AG04450 (cell line): ENCODE measurements at regions of chr7 and their contacts with region 1.

Region 1: DNA sequence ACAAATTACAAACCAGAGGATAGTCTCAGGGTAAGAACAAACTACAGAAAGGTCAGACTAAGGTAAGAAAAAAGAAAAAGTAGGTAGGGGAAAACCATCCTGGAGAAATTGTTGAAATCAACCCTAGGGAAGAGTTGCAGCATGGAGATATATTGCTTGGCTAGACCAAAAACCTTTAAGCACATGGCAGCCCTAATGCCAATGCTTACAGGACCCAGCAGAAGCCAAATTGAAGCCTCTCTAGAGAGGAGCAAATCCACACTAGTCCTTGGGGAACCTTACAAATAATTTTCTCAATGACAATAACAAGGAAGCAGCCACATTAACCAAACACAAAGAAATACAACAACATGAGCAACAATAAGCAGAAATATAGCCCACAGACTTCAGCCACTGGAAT is 81.9 kb downstream of the CNOT4 start:
- DNase-seq: no peak
- H3K4me3 ChIP-seq: no peak overlapping the region
- H3K27ac ChIP-seq: no peak overlapping the region
- H3K27me3 ChIP-seq: no peaks in the 10 kb centered on the region
- CTCF ChIP-seq: no peak

Region 2: DNA sequence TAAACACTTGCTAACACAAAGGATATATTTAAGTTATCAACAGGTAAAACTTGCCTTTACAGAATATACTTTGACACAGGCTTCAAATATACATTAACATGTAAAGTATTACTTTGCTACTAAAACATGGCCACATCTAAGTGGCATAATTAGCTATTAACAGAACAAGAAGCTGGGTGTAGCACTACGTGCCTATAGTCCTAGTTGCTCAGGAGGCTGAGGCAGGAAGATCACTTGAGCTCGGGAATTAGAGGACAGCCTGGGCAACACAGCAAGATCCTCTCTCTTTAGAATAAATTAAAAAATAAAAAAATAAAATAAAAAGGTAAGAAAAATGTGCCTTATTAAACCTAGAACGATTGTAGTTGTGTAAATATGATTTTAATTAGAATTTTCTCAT is 24.7 kb before region 1 on chr7:
- CTCF ChIA-PET with region 1: no interaction called
- POLR2A ChIA-PET with region 1: no interaction called
- DNase-seq: no peak
- H3K4me3 ChIP-seq: no peak overlapping the region
- H3K27ac ChIP-seq: no peak overlapping the region
- H3K27me3 ChIP-seq: no peaks in the 10 kb centered on the region
- CTCF ChIP-seq: no peak

Region 3: GRCh38 chr7:135414850-135415439 is 13.1 kb before region 1 on chr7:
- CTCF ChIA-PET with region 1: interaction called, 10 read pairs
- POLR2A ChIA-PET with region 1: no interaction called
- DNase-seq: peak; percentile 21
- H3K4me3 ChIP-seq: no peak overlapping the region
- H3K27ac ChIP-seq: no peak overlapping the region
- H3K27me3 ChIP-seq: no peaks in the 10 kb centered on the region
- CTCF ChIP-seq: peak; percentile 65